ENCODE measurements at regions of chr7 and their contacts with region 1.

Region 1: GRCh38 chr7:93799750-93800357 is 90.7 kb downstream of the TFPI2 start:
- DNase-seq: no peak
- H3K4me3 ChIP-seq: no peak overlapping the region
- H3K27ac ChIP-seq: no peak overlapping the region
- H3K4me1 ChIP-seq: no peaks in the 10 kb centered on the region
- H3K27me3 ChIP-seq: no peaks in the 10 kb centered on the region
- CTCF ChIP-seq: peak in 2 of 3 experiments; percentile 50 to 59

Region 2: DNA sequence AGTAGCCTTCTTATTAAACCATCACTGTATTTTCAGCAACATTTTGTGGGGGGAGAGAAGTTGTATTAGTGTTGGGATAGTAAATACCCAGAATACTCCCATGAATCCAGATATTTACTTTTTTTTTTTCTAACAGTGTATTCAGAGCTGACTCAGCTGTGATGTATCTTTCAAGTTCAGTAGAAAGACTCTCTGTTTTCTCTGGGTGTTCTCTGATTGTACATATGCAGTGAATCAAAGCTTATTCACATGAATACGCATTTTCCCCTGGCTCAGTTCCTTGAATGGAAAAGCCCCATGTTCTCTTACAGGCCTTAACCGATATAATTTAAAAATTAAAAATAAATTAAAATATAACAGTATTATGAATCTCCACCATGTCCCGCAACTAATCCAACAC is 89.4 kb after region 1 on chr7:
- intact Hi-C with region 1: loop called (anchors 10 kb)
- DNase-seq: no peak
- H3K4me3 ChIP-seq: peak overlapping the region in 1 of 2 donors; percentile 82
- H3K27ac ChIP-seq: no peak overlapping the region
- H3K4me1 ChIP-seq: peaks cover 0 to 2% of the 10 kb centered on the region in 2 donors
- H3K27me3 ChIP-seq: no peaks in the 10 kb centered on the region
- CTCF ChIP-seq: no peak

Measured in ascending aorta (tissue), 2 donors.